Activated T-helper 2 cell treated with anti-CD3 and anti-CD28 coated beads, Interferon-gamma antibody, Interleukin-2, Interleukin-4, amounts not matched to agents 10 μg/mL and 5 μg/mL and 100 μg/mL, durations not matched to agents 14 hours and 24 hours and 36 hours (primary cell): ENCODE measurements at regions of chr10 and their contacts with region 1.

Region 1: GRCh38 chr10:15168781-15169554 is 475 bp upstream of the NMT2 start:
- DNase-seq: peak; percentile 86
- H3K4me3 Mint-ChIP-seq: peak overlapping the region; percentile 78
- H3K27ac Mint-ChIP-seq: peak overlapping the region; percentile 91
- H3K4me1 Mint-ChIP-seq: peaks cover 52% of the 10 kb centered on the region
- H3K27me3 Mint-ChIP-seq: no peaks in the 10 kb centered on the region

Region 2: DNA sequence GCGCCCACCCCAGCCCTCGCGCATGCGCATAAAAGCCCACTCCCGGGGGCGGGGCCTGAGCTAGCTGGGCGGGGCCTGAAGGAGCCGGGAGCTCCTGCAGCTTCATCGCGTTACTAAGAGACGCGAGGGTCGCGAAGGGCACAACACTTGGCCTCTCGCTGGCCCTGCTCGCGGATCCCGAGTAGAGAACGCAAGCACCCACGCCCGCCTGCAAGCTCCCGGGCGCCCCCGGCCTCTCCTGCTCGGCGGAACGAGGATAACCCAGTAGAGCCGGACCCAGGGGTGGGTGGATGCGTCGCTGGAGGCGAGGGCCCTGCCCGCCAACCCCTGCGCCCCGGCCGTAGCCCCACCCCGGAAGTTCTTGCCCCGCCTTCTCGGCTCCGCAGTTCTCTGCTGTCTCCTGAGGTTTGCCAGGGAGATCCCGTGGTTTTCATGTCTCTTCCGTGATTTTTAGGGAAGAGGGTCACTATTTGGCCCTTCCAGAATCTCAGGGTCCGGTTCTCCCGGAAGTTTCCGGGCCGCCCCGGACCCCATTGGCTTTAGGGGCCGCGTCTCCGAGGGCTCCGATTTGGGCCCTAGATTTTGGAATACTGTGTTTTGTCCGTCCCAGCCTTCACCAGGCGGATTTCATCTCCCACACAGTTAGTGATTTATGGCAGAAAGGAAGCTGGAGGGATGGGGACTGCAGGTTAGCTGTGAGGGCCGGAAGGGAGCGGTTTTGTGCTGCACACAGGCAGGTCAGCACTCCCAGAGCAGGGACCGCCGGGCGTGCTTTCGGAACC is 209.5 kb before region 1 on chr10 and contains the start of gene MEIG1:
- intact Hi-C with region 1: loop called (anchors 2 kb)
- DNase-seq: peak; percentile 88
- H3K4me3 Mint-ChIP-seq: peak within 1 kb of the TSS; percentile 94
- H3K27ac Mint-ChIP-seq: peak within 1 kb of the TSS; percentile 99
- H3K4me1 Mint-ChIP-seq: peaks cover 29% of the 10 kb centered on the region
- H3K27me3 Mint-ChIP-seq: no peaks in the 10 kb centered on the region
- total RNA-seq, gene MEIG1: 0.62 TPM in 1 of 2 replicates, not detected in the other

Region 3: DNA sequence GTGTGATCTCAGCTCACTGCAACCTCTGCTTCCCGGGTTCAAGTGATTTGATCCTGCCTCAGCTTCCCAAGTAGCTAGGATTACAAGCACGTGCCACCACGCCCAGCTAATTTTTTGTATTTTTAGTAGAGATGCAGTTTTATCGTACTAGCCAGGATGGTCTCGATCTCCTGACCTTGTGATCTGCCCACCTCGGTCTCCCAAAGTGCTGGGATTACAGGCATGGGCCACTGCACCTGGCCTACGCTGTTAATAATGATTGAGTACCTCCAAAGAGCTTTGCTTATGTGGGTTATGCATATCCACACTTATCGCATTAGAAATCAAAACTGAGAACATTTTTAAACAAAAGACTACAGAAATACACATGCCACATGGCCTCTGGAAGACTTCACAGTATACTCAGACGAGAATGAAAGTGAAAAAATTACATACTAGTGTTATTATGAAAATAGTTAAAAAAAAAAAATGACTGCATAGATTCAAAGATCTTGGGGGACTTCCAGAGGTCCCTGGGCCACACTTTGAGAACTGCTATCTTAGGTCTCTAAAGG is 46.4 kb before region 1 on chr10:
- intact Hi-C with region 1: loop called (anchors 1 kb)
- DNase-seq: no peak
- H3K4me3 Mint-ChIP-seq: peak overlapping the region; percentile 52
- H3K27ac Mint-ChIP-seq: peak overlapping the region; percentile 93
- H3K4me1 Mint-ChIP-seq: peaks cover 40% of the 10 kb centered on the region
- H3K27me3 Mint-ChIP-seq: no peaks in the 10 kb centered on the region

Region 4: DNA sequence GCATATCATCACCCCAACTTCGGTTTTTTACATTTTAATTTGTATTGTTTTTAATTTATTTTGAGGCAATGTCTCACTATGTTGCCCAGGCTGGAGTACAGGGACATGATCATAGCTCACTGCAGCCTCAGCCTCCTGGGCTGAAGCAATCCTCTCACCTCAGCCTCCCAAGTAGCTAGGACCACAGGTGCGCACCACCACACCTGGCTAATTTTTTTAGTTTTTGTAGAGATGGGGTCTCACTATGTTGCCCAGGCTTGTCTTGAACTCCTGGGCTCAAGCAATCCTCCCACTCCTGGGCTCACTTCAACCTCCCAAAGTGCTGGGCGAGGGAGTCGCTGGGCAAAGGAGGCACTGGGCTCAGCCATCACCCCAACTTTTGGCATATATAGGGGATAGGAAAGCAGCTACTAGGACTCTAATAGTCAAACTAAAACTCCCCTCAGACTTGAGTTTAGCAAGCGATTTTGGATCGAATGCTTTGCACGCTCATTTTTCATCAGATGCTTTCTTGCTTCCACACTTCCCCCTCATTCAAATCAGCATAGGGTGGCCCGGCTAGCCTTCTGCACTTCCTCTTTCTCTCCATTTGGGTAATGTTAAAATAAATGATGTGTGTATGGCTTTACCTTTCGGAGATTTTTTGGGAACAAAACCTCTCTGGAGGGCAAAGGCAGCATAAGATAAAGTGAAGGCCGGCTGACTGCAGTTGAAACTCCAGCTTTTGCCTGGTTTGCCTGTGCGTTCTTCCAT is 20.3 kb after region 1 on chr10:
- intact Hi-C with region 1: loop called (anchors 2 kb)
- DNase-seq: no peak
- H3K4me3 Mint-ChIP-seq: no peak overlapping the region
- H3K27ac Mint-ChIP-seq: peak overlapping the region; percentile 66
- H3K4me1 Mint-ChIP-seq: peaks cover 45% of the 10 kb centered on the region
- H3K27me3 Mint-ChIP-seq: no peaks in the 10 kb centered on the region

Region 5: GRCh38 chr10:15254808-15255648 is 86.1 kb after region 1 on chr10:
- intact Hi-C with region 1: loop called (anchors 5 kb)
- DNase-seq: peak; percentile 17
- H3K4me3 Mint-ChIP-seq: peak overlapping the region; percentile 79
- H3K27ac Mint-ChIP-seq: peak overlapping the region; percentile 36
- H3K4me1 Mint-ChIP-seq: peaks cover 20% of the 10 kb centered on the region
- H3K27me3 Mint-ChIP-seq: peaks cover 5% of the 10 kb centered on the region

Region 6: DNA sequence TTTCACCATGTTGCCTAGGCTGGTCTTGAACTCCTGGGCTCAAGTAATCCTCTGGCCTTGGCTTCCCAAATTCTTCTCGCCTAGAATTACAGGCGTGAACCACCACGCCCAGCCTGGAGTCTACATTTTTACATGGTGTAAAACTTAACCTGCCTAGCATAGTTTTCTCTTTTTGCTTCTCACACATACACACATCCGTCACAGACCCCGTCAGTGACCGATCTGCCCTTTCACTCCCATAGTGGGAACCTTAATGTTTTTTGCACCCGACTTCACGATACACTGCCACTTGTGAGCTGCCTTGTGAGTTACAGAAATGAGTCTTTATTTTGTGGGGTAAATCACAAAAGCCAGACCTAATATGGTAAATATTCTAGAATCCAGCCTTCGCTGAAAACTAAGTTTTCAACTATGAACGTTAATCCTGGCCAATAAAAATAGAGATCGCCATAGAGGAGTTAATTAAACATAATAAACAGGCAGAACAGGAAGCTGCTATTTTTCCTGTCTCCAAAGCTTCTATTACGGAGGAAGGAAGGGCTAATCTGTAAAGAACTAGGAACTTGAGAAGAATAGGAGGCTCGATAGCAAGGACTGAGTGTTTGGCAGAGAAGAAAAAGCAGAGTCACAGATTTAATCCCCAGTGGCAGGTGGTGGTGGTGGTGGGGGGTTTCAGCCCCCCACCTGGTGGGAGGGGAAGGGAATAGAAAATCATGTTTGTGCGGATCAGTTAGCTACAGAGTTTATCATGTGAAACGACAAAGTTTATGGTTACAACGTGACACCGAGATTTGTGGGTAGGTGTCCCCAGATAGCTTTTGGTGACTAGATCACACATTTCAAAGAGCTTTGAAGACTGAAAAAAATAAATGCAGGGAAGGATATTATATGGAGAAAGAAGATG is 216.8 kb after region 1 on chr10:
- intact Hi-C with region 1: no loop called
- DNase-seq: no peak
- H3K4me3 Mint-ChIP-seq: no peak overlapping the region
- H3K27ac Mint-ChIP-seq: no peak overlapping the region
- H3K4me1 Mint-ChIP-seq: no peaks in the 10 kb centered on the region
- H3K27me3 Mint-ChIP-seq: peaks cover 26% of the 10 kb centered on the region